Lower leg skin (tissue), 4 donors: ENCODE measurements at regions of chr9 and their contacts with region 1.

Region 1: GRCh38 chr9:36813154-36813553 is 220.9 kb downstream of the PAX5 start:
- DNase-seq: peak in 1 of 2 donors; percentile 8
- H3K4me3 ChIP-seq: no peak overlapping the region
- CTCF ChIP-seq: no peak
- POLR2A ChIP-seq: no peak

Region 2: DNA sequence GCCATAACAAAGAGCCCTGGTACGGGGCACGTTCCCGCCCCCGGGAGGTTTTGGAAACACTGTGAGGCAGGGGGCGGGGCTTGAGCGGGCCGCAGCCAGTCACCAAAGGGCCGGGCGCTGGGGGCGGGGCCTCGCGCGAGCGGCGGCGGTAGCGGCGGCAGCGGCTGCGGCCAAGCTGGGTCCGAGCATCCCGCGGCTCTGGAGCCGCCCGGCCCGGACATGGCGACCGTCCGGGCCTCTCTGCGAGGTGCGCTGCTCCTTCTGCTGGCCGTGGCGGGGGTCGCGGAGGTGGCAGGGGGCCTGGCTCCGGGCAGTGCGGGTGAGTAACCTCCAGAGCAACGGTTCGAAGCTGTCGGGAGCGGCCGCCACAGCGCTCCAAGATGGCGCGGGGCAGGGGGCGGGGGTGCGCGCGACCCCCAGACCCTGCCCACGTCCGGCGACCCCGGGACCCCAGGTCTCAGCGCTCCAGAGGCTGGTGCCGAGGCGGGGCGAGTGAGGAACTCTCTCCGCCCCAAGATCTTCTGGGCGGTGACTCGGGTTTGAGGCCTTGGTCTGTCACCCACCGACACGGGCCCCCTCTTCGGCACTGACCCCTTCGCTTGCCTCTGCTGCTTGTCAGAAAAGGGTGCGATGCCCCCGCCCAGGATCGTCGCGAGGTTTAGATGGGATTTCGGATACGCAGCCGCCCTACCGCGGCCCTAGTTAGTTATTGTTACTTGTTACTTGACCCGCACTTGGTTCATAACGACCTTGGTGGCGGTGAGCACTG is 776.2 kb before region 1 on chr9 and contains the start of gene RECK:
- intact Hi-C with region 1: no loop called
- DNase-seq: peak; percentile 84 to 98
- H3K4me3 ChIP-seq: peak within 1 kb of the TSS; percentile 83
- CTCF ChIP-seq: no peak
- POLR2A ChIP-seq: peak in 1 of 2 donors; percentile 81
- total RNA-seq, gene RECK: 2.1 to 9.7 (median 3.7) TPM

Region 3: GRCh38 chr9:36831381-36832161 is 18.4 kb after region 1 on chr9:
- intact Hi-C with region 1: loop called (anchors 1 kb)
- DNase-seq: no peak
- H3K4me3 ChIP-seq: no peak overlapping the region
- CTCF ChIP-seq: no peak
- POLR2A ChIP-seq: no peak